OCI-LY7 (cell line): ENCODE measurements at regions of chr4 and their contacts with region 1.

Region 1: GRCh38 chr4:8917868-8918783 is 46.5 kb upstream of the HMX1 start:
- DNase-seq: peak; percentile 61
- H3K4me3 ChIP-seq: no peak overlapping the region
- H3K27ac ChIP-seq: no peak overlapping the region
- H3K4me1 ChIP-seq: no peaks in the 10 kb centered on the region
- CTCF ChIP-seq: peak; percentile 87

Region 2: DNA sequence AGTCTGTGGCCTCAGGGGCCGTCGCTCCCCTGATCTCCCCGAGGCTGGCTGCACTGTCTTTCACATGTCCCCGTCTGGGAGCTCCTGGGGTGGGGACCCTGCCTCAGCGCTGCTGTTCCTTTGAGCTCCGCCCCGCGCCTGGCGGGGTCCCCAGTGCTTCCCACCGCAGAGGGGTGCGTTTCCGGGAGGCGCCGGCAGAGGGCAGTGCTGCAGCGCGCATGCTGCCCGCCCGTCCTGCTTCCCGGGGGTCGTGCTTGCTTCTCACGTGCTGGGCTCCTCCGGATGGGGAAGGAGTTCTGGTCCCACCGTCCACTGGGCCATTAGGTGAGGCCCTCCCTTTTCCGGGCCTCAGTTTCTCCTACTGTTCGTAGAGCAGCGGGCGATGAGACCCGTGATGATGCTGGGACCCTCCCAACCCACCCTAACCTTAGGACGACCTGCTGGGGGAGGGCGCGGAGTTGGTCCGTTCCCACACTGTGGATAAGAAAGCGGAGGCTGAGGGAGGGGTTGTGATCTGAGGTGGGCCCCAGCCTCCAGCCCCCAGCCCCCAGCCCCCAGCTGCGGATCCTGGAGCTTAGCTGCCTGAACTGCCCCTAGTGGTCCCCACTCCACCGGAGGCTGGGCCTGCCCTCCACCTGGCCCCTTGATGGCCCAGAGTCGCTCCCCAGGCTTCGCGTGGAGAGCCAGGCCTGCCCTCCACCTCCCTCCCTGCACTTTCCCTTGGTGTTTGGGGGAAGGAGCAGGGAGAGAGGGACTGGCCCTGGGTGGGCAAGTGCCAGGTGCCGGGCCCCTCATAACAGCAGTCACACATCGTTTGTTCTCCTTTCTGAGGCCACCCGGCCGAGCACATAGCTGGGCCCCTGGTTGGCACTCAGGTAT is 310.3 kb before region 1 on chr4:
- CTCF ChIA-PET with region 1: interaction called, 3 read pairs
- POLR2A ChIA-PET with region 1: no interaction called
- intact Hi-C with region 1: loop called (anchors 1 kb)
- DNase-seq: peak; percentile 34
- H3K4me3 ChIP-seq: no peak overlapping the region
- H3K27ac ChIP-seq: no peak overlapping the region
- H3K4me1 ChIP-seq: no peaks in the 10 kb centered on the region
- CTCF ChIP-seq: peak; percentile 84

Region 3: GRCh38 chr4:8675383-8675782 is 242.7 kb before region 1 on chr4:
- CTCF ChIA-PET with region 1: no interaction called
- POLR2A ChIA-PET with region 1: no interaction called
- intact Hi-C with region 1: loop called (anchors 10 kb)
- DNase-seq: no peak
- H3K4me3 ChIP-seq: no peak overlapping the region
- H3K27ac ChIP-seq: no peak overlapping the region
- H3K4me1 ChIP-seq: no peaks in the 10 kb centered on the region
- CTCF ChIP-seq: no peak